ENCODE measurements at regions of chr3 and their contacts with region 1.

Region 1: DNA sequence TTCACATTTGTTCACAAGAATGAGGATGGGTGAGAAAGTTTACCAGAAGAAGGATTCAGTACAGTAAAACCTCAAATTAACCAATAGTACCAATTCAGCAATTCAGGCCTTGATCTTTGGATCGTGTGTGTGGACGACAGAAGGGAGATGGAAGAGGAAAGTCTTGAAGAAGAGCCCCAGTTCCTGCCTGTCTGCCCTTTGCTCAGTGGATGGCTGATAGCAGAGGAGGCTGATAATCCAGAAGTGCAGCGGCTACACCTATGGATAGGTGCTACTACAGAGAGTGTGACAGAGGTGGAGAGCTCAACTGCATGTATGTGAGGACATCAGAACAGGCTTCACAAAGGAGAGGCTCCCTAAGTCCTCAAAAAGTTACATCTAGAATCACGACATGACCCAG is 29.2 kb upstream of the PLXND1 start:
- DNase-seq: no peak
- ATAC-seq: no peak

Region 2: GRCh38 chr3:129927072-129927471 is 291.4 kb after region 1 on chr3:
- intact Hi-C with region 1: loop called (anchors 5 kb)
- DNase-seq: no peak
- ATAC-seq: no peak

Measured in Right ventricle myocardium superior (tissue), 1 donor.